CD14-positive monocyte (primary cell): ENCODE measurements at regions of chr17 and their contacts with region 1.

Region 1: GRCh38 chr17:35529866-35530265 is 7.6 kb downstream of the SLFN12L start:
- DNase-seq: no peak
- H3K4me3 ChIP-seq: no peak overlapping the region
- H3K4me3 Mint-ChIP-seq: no peak overlapping the region
- H3K27ac ChIP-seq: no peak overlapping the region
- H3K27ac Mint-ChIP-seq: peak overlapping the region in 1 of 7 donors; percentile 39
- H3K4me1 ChIP-seq: peaks cover 0 to 4% of the 10 kb centered on the region in 2 donors
- H3K4me1 Mint-ChIP-seq: peaks cover 8% of the 10 kb centered on the region
- H3K27me3 ChIP-seq: no peaks in the 10 kb centered on the region
- H3K27me3 Mint-ChIP-seq: no peaks in the 10 kb centered on the region
- CTCF ChIP-seq: no peak

Region 2: DNA sequence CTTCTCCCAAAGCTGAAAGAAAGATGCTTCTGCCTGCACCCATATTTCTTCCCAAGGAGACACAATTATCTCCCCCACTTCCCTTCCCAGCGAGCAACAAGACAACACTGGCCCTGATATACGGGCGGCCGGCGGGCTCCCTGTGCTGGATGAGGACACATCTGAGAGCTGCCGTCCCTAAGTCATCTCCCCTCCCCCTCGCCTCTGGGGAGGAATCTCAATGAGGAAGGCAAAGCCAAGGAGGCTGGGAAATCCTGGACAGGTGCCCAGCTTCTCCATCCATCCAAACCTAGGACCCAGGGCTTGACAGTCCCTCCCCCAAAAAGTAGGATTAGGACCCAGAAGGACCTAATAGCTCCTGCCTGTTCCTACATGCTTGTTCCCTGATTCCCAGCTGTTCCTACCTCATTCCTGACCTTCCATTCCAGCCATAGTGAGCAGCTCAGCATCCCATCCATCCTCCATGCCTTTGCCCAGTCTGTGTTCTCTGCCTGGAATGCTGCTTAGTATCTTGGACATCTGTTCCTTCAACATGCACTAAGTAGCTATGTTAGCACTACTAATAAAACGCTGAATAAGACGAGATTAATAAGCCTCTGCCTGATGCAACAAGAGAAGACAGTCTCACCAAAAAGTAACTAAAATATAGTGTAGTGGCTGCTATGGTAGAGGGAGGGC is 736.5 kb before region 1 on chr17:
- intact Hi-C with region 1: no loop called
- DNase-seq: no peak
- H3K4me3 ChIP-seq: no peak overlapping the region
- H3K4me3 Mint-ChIP-seq: no peak overlapping the region
- H3K27ac ChIP-seq: no peak overlapping the region
- H3K27ac Mint-ChIP-seq: no peak overlapping the region
- H3K4me1 ChIP-seq: no peaks in the 10 kb centered on the region
- H3K4me1 Mint-ChIP-seq: no peaks in the 10 kb centered on the region
- H3K27me3 ChIP-seq: no peaks in the 10 kb centered on the region
- H3K27me3 Mint-ChIP-seq: peaks cover 0 to 4% (median 2%) of the 10 kb centered on the region in 3 donors
- CTCF ChIP-seq: no peak

Region 3: DNA sequence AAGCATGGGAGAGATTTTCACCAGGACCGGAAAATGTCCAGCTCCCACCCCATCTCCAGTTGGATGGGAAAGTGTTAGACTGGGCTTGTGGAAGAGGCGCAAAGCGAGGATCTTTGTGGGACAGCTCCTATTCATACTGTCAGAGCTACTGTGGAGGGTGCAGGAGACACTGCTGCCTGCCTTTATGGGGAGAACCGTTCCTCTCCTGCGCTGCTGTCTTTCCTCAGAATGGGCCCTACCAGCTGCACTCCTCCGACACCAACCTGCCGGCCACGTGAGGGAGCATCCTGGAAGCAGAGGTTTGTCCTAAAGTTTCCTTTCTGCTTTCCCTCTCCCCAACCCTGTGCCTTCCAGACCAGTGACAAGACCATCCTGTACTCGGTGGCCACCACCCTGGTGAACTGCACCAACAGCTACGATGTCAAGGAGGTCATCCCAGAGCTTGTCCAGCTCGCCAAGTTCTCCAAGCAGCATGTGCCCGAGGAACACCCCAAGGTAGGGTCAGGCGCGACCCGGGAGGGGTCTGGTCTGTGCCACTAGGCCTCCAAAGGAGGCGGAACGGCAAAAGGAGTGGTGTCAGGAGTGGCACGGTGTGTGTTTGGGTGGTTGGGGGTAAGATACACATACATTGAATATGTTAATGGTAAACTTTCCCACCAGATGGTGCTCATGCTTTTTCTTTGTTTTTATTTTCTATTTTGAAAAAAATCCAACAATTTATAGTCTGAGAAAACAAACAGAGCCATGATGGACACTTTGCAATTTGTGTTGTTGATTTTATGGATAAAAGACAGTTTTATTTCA is 358.7 kb before region 1 on chr17:
- intact Hi-C with region 1: loop called (anchors 2 to 5 kb)
- DNase-seq: no peak
- H3K4me3 ChIP-seq: no peak overlapping the region
- H3K4me3 Mint-ChIP-seq: no peak overlapping the region
- H3K27ac ChIP-seq: no peak overlapping the region
- H3K27ac Mint-ChIP-seq: peak overlapping the region in 1 of 7 donors; percentile 44
- H3K4me1 ChIP-seq: no peaks in the 10 kb centered on the region
- H3K4me1 Mint-ChIP-seq: peaks cover 3% of the 10 kb centered on the region
- H3K27me3 ChIP-seq: no peaks in the 10 kb centered on the region
- H3K27me3 Mint-ChIP-seq: peaks cover 1 to 4% (median 4%) of the 10 kb centered on the region in 3 donors
- CTCF ChIP-seq: peak; percentile 36

Region 4: GRCh38 chr17:35299129-35299528 is 230.7 kb before region 1 on chr17:
- intact Hi-C with region 1: no loop called
- DNase-seq: no peak
- H3K4me3 ChIP-seq: no peak overlapping the region
- H3K4me3 Mint-ChIP-seq: no peak overlapping the region
- H3K27ac ChIP-seq: no peak overlapping the region
- H3K27ac Mint-ChIP-seq: no peak overlapping the region
- H3K4me1 ChIP-seq: no peaks in the 10 kb centered on the region
- H3K4me1 Mint-ChIP-seq: no peaks in the 10 kb centered on the region
- H3K27me3 ChIP-seq: no peaks in the 10 kb centered on the region
- H3K27me3 Mint-ChIP-seq: peaks cover 9 to 17% (median 11%) of the 10 kb centered on the region in 3 donors
- CTCF ChIP-seq: no peak

Region 5: GRCh38 chr17:35312790-35313711 is 216.8 kb before region 1 on chr17:
- intact Hi-C with region 1: loop called (anchors 2 to 5 kb)
- DNase-seq: peak; percentile 66 to 77 (median 71)
- H3K4me3 ChIP-seq: peak overlapping the region; percentile 48 to 85 (median 56)
- H3K4me3 Mint-ChIP-seq: peak overlapping the region; percentile 93 to 95
- H3K27ac ChIP-seq: peak overlapping the region in 1 of 2 donors; percentile 86
- H3K27ac Mint-ChIP-seq: peak overlapping the region; percentile 43 to 92 (median 83)
- H3K4me1 ChIP-seq: peaks cover 18 to 26% of the 10 kb centered on the region in 2 donors
- H3K4me1 Mint-ChIP-seq: peaks cover 27% of the 10 kb centered on the region
- H3K27me3 ChIP-seq: no peaks in the 10 kb centered on the region
- H3K27me3 Mint-ChIP-seq: peaks cover 1 to 4% (median 3%) of the 10 kb centered on the region in 3 donors
- CTCF ChIP-seq: peak; percentile 84